Sciatic nerve (tissue), 2 donors: ENCODE measurements at regions of chr12 and their contacts with region 1.

Region 1: GRCh38 chr12:102879144-102879763 is 37.8 kb downstream of the PAH start:
- DNase-seq: peak; percentile 64
- ATAC-seq: peak; percentile 87

Region 2: DNA sequence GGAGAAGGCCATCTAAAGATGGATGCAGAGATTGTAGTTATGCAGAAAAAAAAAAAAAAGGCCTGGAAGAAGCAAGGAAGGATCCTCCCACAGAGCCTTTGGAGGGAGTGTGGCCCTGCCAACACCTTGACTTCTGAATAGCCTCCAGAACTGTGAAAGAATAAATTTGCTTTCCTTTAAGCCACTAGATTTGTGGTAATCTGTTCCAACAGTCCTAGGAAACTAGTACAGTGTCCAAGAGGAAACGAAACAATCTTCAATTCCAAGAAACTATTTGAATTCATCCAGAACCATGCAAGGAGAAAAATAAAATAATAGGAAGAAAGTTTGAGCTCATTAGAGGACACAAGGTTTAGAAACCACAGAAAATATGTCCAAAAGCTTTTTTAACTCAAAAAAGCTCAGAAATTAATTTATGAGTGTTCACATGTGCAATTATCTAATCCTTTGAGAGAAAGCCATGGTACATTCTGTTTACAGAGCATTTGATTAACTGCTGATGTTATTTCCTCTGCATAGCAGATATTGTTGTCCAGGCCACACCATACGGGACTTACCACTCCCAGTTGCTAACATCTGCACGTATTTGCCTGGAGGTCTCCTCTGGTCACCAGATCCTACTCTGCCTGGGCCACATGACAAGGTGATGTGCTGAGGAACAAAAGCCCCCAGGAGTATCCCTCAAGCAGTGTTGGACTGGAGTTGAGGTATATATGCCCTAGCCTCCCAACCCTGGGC is 677.8 kb after region 1 on chr12:
- intact Hi-C with region 1: loop called (anchors 10 kb)
- DNase-seq: no peak
- ATAC-seq: peak; percentile 94